Activated B cell treated with CpG ODN at 0.5 μM for 24 hours (primary cell): ENCODE measurements at regions of chr2 and their contacts with region 1.

Region 1: DNA sequence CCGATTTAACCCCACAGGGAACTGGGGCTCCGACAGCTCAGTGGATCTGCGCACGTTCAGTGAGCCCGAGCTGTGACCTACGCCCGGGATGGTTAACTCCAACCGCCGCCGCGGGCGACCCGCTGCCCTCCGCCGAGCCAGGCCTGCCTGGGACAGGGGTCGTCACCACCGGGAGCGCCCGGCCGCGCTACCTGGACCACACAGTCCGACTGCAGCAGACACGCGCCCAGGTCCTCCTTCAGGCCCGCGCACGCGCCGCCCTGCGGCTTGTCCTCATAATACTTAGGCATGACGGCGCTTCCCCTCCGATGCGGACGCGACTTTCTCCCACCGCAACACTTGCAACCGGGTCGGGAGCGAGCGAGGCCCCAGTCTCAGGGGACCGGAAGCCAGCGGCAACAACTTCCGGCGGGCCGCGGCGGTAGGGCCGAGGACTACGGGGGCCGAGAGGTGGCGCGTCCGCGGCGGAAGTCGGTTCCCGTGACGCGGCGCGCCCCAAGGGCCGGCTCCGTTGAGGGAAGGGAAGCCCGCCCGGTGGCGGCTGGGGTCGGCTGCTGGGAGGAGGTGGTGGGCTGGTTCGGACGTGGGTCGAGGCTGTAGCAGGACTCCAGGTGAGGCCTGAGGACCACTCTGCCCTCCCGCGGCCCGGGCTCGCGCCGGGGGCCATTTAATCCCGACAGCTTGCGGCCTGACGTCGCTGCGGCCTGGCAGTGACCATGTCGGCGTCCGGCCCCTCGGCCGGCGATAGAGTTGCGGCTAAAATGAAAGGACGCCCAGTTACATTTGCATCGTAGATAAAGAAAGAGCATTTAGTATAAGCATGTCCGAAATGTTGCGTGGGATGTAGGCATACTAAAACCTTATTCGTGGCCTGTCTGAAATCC is at the starts of genes COA5 and UNC50:
- DNase-seq: peak; percentile 88
- ATAC-seq: peak; percentile 91
- H3K4me3 Mint-ChIP-seq: peak within 1 kb of the TSS; percentile 93
- H3K27ac Mint-ChIP-seq: peak within 1 kb of the TSS; percentile 86
- H3K4me1 Mint-ChIP-seq: peaks cover 55% of the 10 kb centered on the region
- H3K27me3 Mint-ChIP-seq: no peaks in the 10 kb centered on the region
- CTCF ChIP-seq: no peak
- total RNA-seq, gene COA5: 31.5 and 37.6 TPM in 2 replicates
- total RNA-seq, gene UNC50: 35.3 and 36.3 TPM in 2 replicates

Region 2: GRCh38 chr2:98556344-98557033 is 51.9 kb before region 1 on chr2:
- CTCF ChIA-PET with region 1: no interaction called
- POLR2A ChIA-PET with region 1: no interaction called
- intact Hi-C with region 1: loop called (anchors 2 kb)
- DNase-seq: no peak
- ATAC-seq: peak; percentile 99
- H3K4me3 Mint-ChIP-seq: no peak overlapping the region
- H3K27ac Mint-ChIP-seq: peak overlapping the region; percentile 71
- H3K4me1 Mint-ChIP-seq: peaks cover 39% of the 10 kb centered on the region
- H3K27me3 Mint-ChIP-seq: no peaks in the 10 kb centered on the region
- CTCF ChIP-seq: no peak